HCT116 (cell line): ENCODE measurements at regions of chr13 and their contacts with region 1.

Region 1: GRCh38 chr13:46831588-46832194 is 34.7 kb upstream of the ESD start:
- DNase-seq: peak; percentile 51
- ATAC-seq: peak; percentile 91
- H3K4me3 ChIP-seq: no peak overlapping the region
- H3K27ac ChIP-seq: no peak overlapping the region
- H3K4me1 ChIP-seq: no peaks in the 10 kb centered on the region
- H3K27me3 ChIP-seq: no peaks in the 10 kb centered on the region
- CTCF ChIP-seq: peak; percentile 48 to 95 (median 59); a peak in 5 of 6 replicates
- POLR2A ChIP-seq: no peak
- RAD21 ChIP-seq: peak; percentile 78

Region 2: GRCh38 chr13:47598340-47598911 is 766.7 kb after region 1 on chr13:
- CTCF ChIA-PET with region 1: no interaction called
- POLR2A ChIA-PET with region 1: no interaction called
- RAD21 ChIA-PET with region 1: no interaction called
- intact Hi-C with region 1: loop called (anchors 1 kb)
- DNase-seq: no peak
- ATAC-seq: no peak
- H3K4me3 ChIP-seq: no peak overlapping the region
- H3K27ac ChIP-seq: no peak overlapping the region
- H3K4me1 ChIP-seq: no peaks in the 10 kb centered on the region
- H3K27me3 ChIP-seq: peaks cover 5% of the 10 kb centered on the region; the same call in 1 of the 2 replicates
- CTCF ChIP-seq: peak in 2 of 3 experiments; percentile 20 to 44; a peak in 2 of 6 replicates
- POLR2A ChIP-seq: no peak
- RAD21 ChIP-seq: peak; percentile 16; the same call in 1 of the 2 replicates

Region 3: DNA sequence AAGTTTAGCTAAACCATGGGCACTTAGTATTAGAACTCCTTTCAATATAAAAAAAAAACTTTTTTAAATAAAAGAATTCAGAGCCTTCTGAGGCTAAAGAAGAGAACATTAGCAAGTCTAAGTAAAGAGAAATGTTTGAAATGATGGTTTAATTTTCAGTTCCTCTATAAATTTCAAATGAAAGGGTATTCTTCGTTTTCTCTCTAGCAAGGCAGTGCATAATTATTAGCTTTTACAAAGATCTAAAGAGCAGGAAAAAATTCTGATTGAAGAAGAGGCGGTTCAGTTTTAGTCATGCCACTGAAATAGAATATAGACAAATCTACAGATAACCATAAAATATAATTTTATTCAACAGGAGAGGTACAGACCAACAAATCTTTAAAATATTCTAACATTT is 1151.4 kb after region 1 on chr13:
- CTCF ChIA-PET with region 1: no interaction called
- POLR2A ChIA-PET with region 1: no interaction called
- RAD21 ChIA-PET with region 1: no interaction called
- intact Hi-C with region 1: loop called (anchors 10 kb)
- DNase-seq: no peak
- ATAC-seq: no peak
- H3K4me3 ChIP-seq: no peak overlapping the region
- H3K27ac ChIP-seq: no peak overlapping the region
- H3K4me1 ChIP-seq: no peaks in the 10 kb centered on the region
- H3K27me3 ChIP-seq: no peaks in the 10 kb centered on the region
- CTCF ChIP-seq: no peak
- POLR2A ChIP-seq: no peak
- RAD21 ChIP-seq: no peak